AG04449 (cell line): ENCODE measurements at regions of chr3 and their contacts with region 1.

Region 1: GRCh38 chr3:123700791-123701722 is 116.2 kb upstream of the HACD2 start:
- DNase-seq: no peak
- H3K4me3 ChIP-seq: no peak overlapping the region
- CTCF ChIP-seq: no peak

Region 2: DNA sequence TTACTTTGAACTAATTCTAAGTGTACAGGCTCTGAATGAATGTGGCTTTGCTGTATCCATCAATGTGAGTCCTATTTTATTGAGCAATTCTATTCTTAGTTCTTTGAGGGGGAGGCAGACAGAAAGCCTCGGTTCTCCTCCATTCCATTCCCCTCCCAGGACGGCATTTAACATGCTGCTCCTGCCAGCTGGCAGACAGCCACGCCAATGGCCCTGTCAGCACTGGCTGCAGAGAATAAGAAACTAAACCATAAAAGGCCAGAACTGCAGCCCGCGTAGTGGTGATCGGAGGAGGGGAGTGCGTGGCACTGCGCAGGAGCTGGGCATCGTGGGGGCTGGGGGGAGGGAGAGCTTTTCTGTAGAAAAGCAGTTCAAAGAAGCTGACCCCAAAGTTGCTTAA is 40.2 kb before region 1 on chr3:
- CTCF ChIA-PET with region 1: interaction called, 436 read pairs
- POLR2A ChIA-PET with region 1: no interaction called
- DNase-seq: peak; percentile 98
- H3K4me3 ChIP-seq: no peak overlapping the region
- CTCF ChIP-seq: no peak

Region 3: GRCh38 chr3:123712077-123712860 is 11.2 kb after region 1 on chr3:
- CTCF ChIA-PET with region 1: interaction called, 71 read pairs
- POLR2A ChIA-PET with region 1: no interaction called
- DNase-seq: no peak
- H3K4me3 ChIP-seq: no peak overlapping the region
- CTCF ChIP-seq: no peak